Gastrocnemius medialis (tissue), 4 donors: ENCODE measurements at regions of chr11 and their contacts with region 1.

Region 1: DNA sequence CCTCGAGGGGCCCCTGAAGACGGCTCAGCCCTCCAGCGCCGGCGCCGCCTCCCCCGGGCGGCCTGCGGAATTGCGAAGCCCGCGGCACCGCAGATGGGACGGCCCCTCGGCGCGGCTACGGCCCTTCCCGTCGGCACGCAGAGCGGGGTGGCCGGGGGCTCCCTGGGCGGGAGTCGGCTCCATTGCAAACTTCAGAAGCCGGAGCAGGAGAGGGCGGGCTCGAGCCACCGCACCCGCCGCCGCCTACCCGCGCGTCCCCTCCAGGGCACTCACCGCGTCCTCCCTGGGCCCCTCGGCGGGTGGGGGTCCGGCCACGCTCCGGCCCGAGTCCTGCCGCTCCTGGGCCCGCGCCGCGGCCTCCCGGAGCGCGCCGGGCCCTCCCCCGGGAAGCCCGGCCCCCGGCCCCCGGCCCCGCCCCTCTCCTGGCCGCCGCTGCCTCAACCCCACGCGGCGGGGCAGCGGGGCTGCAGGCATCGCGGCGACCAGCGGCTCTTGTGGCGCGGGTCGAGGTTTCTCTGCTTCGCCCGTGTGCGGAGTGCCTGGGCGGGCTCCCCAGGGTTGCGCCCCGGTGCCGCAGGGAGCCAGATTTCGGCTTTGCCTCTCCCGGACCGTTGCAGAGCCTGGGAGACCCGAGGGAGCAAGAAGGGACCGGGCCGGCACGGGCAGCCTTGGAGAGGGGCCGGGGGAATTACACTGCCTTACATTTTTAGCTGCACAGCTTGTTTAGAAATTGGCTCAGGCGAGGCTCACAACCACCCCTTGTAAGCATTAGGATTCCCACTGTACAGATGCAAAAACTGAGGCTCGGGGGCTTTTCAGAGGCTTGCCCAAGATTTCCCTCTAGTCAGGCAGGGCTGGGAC is at the start of gene PACSIN3:
- DNase-seq: peak in 1 of 2 donors; percentile 65
- ATAC-seq: peak; percentile 28 to 43
- H3K4me3 ChIP-seq: peak within 1 kb of the TSS; percentile 68 to 91 (median 84)
- H3K27ac ChIP-seq: peak within 1 kb of the TSS; percentile 97 to 99 (median 98)
- H3K4me1 ChIP-seq: peaks cover 45 to 62% of the 10 kb centered on the region in 2 donors
- H3K27me3 ChIP-seq: no peaks in the 10 kb centered on the region
- CTCF ChIP-seq: peak in 3 of 5 experiments; percentile 13 to 34 (median 28)
- POLR2A ChIP-seq: peak in 1 of 2 donors; percentile 59
- total RNA-seq, gene PACSIN3: 129 to 369 (median 205) TPM

Region 2: GRCh38 chr11:46367244-46367915 is 818.9 kb before region 1 on chr11:
- in situ Hi-C with region 1: no loop called
- intact Hi-C with region 1: loop called (anchors 10 kb)
- DNase-seq: peak in 1 of 2 donors; percentile 66
- ATAC-seq: peak in 1 of 2 donors; percentile 18
- H3K4me3 ChIP-seq: no peak overlapping the region
- H3K27ac ChIP-seq: peak overlapping the region; percentile 98 to 100 (median 98)
- H3K4me1 ChIP-seq: peaks cover 49 to 55% of the 10 kb centered on the region in 2 donors
- H3K27me3 ChIP-seq: no peaks in the 10 kb centered on the region
- CTCF ChIP-seq: peak; percentile 92 to 98 (median 96)
- POLR2A ChIP-seq: no peak

Region 3: GRCh38 chr11:47083913-47084312 is 102.4 kb before region 1 on chr11:
- in situ Hi-C with region 1: no loop called
- intact Hi-C with region 1: no loop called
- DNase-seq: no peak
- ATAC-seq: no peak
- H3K4me3 ChIP-seq: no peak overlapping the region
- H3K27ac ChIP-seq: no peak overlapping the region
- H3K4me1 ChIP-seq: no peaks in the 10 kb centered on the region
- H3K27me3 ChIP-seq: no peaks in the 10 kb centered on the region
- CTCF ChIP-seq: no peak
- POLR2A ChIP-seq: no peak

Region 4: DNA sequence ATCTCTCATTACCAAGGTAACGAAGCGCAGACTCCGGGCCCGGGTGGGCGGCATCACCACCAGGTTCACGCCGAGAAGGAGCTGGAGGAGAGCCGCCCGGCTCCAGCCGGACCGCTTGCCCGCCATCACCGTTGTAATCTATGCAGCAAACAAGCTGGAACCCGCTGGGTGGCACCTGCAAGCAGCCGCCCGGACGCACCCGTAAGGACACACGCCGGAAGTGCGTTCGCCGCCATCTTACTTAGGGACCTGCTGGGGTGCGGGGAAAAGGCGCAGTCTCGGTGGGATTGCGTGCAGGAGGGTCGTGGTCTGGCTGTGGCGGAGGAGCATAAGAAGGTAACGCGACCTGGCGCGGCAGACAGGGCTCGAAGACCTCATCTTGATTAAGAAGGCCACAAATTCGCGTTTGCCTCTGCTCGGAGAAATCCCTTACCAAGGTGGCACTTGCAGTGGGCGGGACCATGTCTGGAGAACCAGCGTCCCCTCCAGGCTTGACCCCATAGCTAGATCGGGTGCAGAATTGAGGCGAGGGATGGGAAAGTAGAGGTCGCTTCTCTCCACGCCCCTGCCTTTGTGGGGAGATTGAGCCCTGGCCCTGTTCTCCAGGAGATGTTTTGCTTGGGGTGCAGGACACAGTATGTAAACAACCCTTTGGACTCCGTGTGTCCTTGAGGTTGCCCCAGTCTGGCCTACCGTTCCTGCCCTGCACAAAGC is 62.5 kb after region 1 on chr11 and contains the start of gene ACP2:
- in situ Hi-C with region 1: loop called in 1 of 4 experiments (anchors 5 kb)
- intact Hi-C with region 1: loop called (anchors 2 kb)
- DNase-seq: peak; percentile 83 to 88
- ATAC-seq: peak; percentile 95 to 97
- H3K4me3 ChIP-seq: peak within 1 kb of the TSS; percentile 79 to 96 (median 92)
- H3K27ac ChIP-seq: peak within 1 kb of the TSS; percentile 84 to 97 (median 94)
- H3K4me1 ChIP-seq: peaks cover 21 to 30% of the 10 kb centered on the region in 2 donors
- H3K27me3 ChIP-seq: no peaks in the 10 kb centered on the region
- CTCF ChIP-seq: peak in 4 of 5 experiments; percentile 17 to 36 (median 32)
- POLR2A ChIP-seq: peak; percentile 46 to 49
- total RNA-seq, gene ACP2: 12.4 to 36.2 (median 27.9) TPM

Region 5: DNA sequence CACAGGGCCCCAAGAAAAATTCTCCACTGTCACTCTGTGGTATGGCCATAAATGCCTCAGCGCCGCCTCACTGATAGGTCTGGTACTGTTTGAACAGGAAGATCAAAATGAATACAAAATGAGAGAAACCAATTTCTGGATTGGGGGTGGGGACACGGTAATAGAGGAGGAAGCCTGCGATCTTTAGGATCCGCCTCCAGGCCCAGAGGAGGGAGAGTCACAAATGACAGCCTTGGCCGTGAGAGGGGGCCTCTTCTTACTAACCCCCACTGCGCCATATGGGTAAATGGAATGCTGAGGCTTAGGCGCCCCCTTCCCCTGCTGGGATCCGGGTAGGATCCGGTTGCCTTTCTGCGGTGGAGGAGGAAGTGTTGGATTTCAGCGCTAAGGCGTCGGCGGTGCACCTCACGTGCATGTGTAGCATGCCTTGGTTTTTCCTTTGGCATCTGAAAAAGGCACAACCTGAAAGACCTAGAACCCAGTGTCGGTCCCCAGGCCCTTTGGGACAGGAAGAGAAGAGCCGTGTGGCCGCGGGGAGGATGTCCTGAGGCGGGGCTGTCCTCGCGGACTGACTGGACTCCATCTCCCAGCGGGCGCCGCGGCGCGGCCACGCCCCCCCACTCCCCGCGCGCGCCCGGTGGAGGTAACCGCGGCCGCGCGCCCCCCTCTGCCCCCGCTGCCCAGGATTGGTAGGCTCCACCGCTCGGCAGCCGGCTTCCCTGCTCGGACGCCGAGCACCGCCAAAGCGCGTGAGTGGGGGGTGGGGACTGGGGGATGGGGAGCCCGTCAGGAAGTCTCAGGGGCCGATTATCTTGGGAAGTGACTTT is 82.9 kb after region 1 on chr11:
- in situ Hi-C with region 1: no loop called
- intact Hi-C with region 1: loop called (anchors 1 kb)
- DNase-seq: peak; percentile 88 to 93
- ATAC-seq: peak; percentile 77 to 81
- H3K4me3 ChIP-seq: peak overlapping the region; percentile 55 to 87 (median 86)
- H3K27ac ChIP-seq: peak overlapping the region; percentile 98 to 99 (median 98)
- H3K4me1 ChIP-seq: peaks cover 37 to 40% of the 10 kb centered on the region in 2 donors
- H3K27me3 ChIP-seq: no peaks in the 10 kb centered on the region
- CTCF ChIP-seq: no peak
- POLR2A ChIP-seq: no peak

Region 6: DNA sequence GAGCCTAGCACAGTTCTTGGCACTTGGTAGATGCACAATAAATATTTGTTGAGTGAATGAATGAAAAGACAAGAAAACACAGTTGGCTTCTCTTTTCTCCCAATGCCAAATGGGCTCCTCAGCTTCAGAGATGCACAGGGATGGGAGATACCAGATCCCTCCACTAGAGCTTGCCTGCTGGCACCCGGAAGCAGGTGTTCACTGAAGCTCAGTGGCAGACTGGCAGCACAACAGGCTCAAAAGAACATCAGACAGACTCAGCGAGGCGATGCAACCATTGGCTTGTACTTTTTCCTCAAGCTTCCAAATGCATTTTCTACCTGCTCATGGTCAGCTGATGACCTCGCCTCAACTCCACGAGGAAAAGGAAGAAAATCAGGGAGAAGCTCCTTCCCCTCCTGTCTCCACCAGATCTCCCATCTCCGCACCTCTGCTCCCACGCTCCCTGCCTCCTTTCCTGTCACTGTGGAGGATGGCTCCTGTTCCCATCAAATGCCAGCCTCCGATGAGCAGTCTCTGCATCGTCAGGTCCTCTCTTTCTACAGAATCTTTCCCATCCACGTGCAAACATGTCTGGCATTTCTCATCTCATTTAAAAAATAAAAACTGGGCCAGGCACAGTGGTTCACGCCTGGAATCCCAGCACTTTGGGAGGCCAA is 256.9 kb after region 1 on chr11:
- in situ Hi-C with region 1: no loop called
- intact Hi-C with region 1: loop called (anchors 10 kb)
- DNase-seq: no peak
- ATAC-seq: peak in 1 of 2 donors; percentile 33
- H3K4me3 ChIP-seq: no peak overlapping the region
- H3K27ac ChIP-seq: peak overlapping the region; percentile 39 to 58 (median 46)
- H3K4me1 ChIP-seq: peaks cover 17 to 20% of the 10 kb centered on the region in 2 donors
- H3K27me3 ChIP-seq: no peaks in the 10 kb centered on the region
- CTCF ChIP-seq: peak in 1 of 5 experiments; percentile 18
- POLR2A ChIP-seq: no peak

Region 7: GRCh38 chr11:47766305-47767227 is 580.3 kb after region 1 on chr11:
- in situ Hi-C with region 1: no loop called
- intact Hi-C with region 1: loop called (anchors 10 kb)
- DNase-seq: peak; percentile 64 to 72
- ATAC-seq: peak; percentile 52 to 57
- H3K4me3 ChIP-seq: peak overlapping the region; percentile 70 to 88 (median 75)
- H3K27ac ChIP-seq: peak overlapping the region; percentile 90 to 98 (median 96)
- H3K4me1 ChIP-seq: peaks cover 19 to 22% of the 10 kb centered on the region in 2 donors
- H3K27me3 ChIP-seq: no peaks in the 10 kb centered on the region
- CTCF ChIP-seq: peak in 1 of 5 experiments; percentile 8
- POLR2A ChIP-seq: no peak